Heart left ventricle (tissue), 16 donors: ENCODE measurements at regions of chr10 and their contacts with region 1.

Region 1: GRCh38 chr10:7417103-7417623 is 6.3 kb upstream of the SFMBT2 start:
- DNase-seq: no peak
- ATAC-seq: no peak
- H3K4me3 ChIP-seq: no peak overlapping the region
- H3K27ac ChIP-seq: no peak overlapping the region
- H3K4me1 ChIP-seq: peaks cover 0 to 15% (median 8%) of the 10 kb centered on the region in 12 donors
- H3K27me3 ChIP-seq: peaks cover 0 to 16% (median 4%) of the 10 kb centered on the region in 9 donors
- CTCF ChIP-seq: peak; percentile 39 to 74 (median 64)
- POLR2A ChIP-seq: no peak

Region 2: GRCh38 chr10:6667679-6668270 is 749.4 kb before region 1 on chr10:
- intact Hi-C with region 1: loop called in 7 of 10 experiments (anchors 5 to 10 kb)
- DNase-seq: no peak
- ATAC-seq: no peak
- H3K4me3 ChIP-seq: no peak overlapping the region
- H3K27ac ChIP-seq: no peak overlapping the region
- H3K4me1 ChIP-seq: peaks cover 0 to 7% (median 0%) of the 10 kb centered on the region in 12 donors
- H3K27me3 ChIP-seq: peaks cover 0 to 27% (median 0%) of the 10 kb centered on the region in 9 donors
- CTCF ChIP-seq: peak in 11 of 12 donors; percentile 13 to 56 (median 30)
- POLR2A ChIP-seq: no peak

Region 3: DNA sequence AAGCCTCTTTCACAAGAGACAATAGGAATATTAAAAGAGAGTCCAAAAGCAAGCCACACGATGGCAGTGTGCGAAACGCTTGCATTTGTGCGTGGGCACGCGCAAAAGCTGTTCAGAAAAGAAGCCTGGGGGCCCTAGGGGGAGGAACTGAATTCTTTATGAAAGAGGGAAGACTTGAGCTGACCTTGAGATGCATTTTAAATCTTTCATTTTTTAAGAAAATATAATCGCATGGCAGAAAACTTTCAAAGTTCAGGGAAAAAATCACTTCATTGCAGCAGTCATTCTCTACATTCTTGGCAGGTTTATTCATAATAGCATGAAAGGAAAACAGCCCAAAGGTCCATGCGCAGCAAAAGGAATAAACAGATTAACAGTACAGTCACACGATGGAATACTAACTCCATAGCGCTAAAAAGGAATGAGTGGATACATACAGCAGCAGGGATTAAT is 630.6 kb before region 1 on chr10:
- intact Hi-C with region 1: loop called in 5 of 10 experiments (anchors 5 to 10 kb)
- DNase-seq: no peak
- ATAC-seq: peak in 1 of 4 donors; percentile 63
- H3K4me3 ChIP-seq: no peak overlapping the region
- H3K27ac ChIP-seq: no peak overlapping the region
- H3K4me1 ChIP-seq: no peaks in the 10 kb centered on the region
- H3K27me3 ChIP-seq: no peaks in the 10 kb centered on the region
- CTCF ChIP-seq: peak in 8 of 12 donors; percentile 25 to 45 (median 28)
- POLR2A ChIP-seq: no peak

Region 4: DNA sequence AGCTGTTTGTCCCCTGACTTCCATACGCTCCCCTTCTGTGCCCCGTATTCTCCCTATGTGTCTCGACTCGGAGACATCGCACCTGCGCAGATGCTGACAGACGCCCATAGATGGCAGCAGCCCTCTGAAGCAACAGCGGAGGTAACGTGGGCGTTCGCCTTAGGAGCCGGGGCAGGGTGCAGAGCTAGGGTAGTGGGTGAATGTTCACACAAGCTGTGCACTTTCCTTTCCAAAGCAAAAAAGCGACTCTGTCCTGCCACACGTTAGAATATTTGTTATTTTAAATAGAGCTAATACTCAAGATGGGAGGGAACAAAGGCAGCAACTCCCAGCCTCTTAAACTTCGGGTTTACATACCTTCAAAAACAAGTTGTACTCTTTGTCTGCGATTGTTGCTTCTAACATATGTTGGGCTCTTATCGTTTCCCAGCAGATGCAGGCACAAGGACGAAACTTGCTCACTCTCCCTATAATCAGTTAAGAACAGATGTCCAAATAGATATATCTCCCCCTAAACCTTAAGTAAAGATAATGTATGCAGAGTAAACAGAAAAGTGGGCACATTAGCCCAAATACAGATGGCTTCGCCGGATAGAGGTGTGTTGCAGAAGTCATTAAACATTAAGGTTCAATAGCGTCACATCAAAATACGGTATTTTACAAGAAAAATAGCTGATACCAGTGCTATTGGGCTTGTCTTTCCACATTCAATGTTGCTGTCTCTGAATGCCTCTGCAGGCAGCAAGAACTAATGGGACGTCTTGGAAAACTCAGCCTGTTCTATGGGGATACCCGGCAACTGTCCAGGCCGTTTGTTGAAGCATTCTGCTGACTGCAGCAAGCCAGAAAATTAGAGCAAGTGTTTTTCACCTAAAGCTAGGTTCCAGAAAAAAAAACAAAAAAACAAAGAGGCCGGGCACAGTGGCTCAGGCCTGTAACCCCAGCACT is 496.8 kb before region 1 on chr10:
- intact Hi-C with region 1: loop called (anchors 1 to 10 kb)
- DNase-seq: peak; percentile 53 to 86 (median 69)
- ATAC-seq: peak; percentile 73 to 95 (median 92)
- H3K4me3 ChIP-seq: peak overlapping the region in 1 of 12 donors; percentile 7
- H3K27ac ChIP-seq: no peak overlapping the region
- H3K4me1 ChIP-seq: peaks cover 0 to 19% (median 1%) of the 10 kb centered on the region in 12 donors
- H3K27me3 ChIP-seq: peaks cover 0 to 3% (median 0%) of the 10 kb centered on the region in 9 donors
- CTCF ChIP-seq: peak; percentile 28 to 69 (median 59)
- POLR2A ChIP-seq: no peak

Region 5: DNA sequence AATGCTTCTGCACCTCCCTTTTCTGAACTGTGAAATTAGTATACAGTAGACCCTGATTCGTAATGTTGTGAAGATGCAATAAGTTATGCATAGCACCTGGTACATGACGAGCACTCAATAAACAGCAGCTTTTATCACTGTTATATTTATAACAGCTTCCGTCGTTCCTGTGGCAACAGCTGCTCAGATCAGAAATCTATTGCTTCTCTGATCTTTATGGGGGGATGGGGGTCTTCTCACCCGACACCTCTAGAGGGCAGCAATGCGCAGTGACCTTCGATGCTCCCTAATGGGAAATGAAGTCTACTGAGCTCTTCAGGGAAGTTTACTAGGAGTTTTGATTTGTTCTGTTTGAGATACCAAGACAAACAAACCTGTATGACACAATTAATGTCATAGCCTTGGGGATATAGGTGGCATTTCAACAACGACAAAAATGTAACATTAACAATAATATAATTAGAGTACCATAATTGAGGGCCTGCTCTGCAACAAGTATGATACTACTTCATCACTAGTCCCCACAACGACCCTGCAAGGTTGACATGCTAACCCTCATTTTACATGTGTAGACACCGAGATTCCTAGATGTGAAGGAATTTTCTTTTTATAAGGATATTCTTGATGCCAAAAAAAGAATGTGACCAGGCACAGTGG is 295.9 kb before region 1 on chr10:
- intact Hi-C with region 1: loop called in 9 of 10 experiments (anchors 2 to 5 kb)
- DNase-seq: peak in 4 of 5 donors; percentile 28 to 45 (median 40)
- ATAC-seq: peak in 3 of 4 donors; percentile 60 to 66 (median 61)
- H3K4me3 ChIP-seq: no peak overlapping the region
- H3K27ac ChIP-seq: no peak overlapping the region
- H3K4me1 ChIP-seq: peaks cover 0 to 2% (median 0%) of the 10 kb centered on the region in 12 donors
- H3K27me3 ChIP-seq: peaks cover 0 to 12% (median 0%) of the 10 kb centered on the region in 9 donors
- CTCF ChIP-seq: peak; percentile 48 to 75 (median 68)
- POLR2A ChIP-seq: no peak

Region 6: DNA sequence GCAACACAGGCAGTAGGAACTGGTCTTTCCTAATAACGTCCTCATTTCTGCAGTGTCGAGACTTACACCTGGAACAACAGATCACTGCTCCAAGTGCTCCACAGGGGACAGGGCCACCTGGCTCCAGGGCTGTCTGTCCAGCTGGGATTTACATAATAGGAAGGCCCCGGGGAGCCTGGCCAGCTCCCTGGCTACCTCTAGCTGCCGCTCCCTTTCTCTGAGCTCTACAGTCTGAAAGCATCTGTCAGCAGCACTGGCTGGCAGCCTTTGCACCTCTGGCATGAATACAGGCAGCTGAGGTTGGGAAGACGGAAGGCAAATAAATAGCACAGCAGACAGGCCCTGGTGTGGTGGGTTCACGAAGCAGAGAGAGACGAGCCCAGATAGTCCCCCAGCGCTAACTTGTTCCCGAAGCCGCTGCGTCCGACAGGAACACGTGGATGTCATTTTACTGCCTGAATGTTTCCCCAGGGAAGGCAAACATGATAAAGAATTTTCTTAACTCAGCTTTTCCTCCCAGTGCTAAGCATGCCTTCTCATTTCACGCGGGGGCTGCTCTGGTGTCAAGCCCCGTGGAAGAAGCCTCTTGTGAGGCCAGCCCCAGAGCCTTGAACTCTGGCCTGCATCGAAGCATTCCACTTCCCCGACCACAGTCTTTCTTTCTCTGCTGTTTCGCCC is 144.2 kb after region 1 on chr10:
- intact Hi-C with region 1: no loop called
- DNase-seq: peak; percentile 79 to 91 (median 85)
- ATAC-seq: peak; percentile 87 to 93 (median 93)
- H3K4me3 ChIP-seq: no peak overlapping the region
- H3K27ac ChIP-seq: peak overlapping the region; percentile 4 to 80 (median 44)
- H3K4me1 ChIP-seq: peaks cover 0 to 47% (median 28%) of the 10 kb centered on the region in 12 donors
- H3K27me3 ChIP-seq: no peaks in the 10 kb centered on the region
- CTCF ChIP-seq: peak in 5 of 12 donors; percentile 9 to 30 (median 24)
- POLR2A ChIP-seq: no peak